ENCODE measurements at regions of chr1 and their contacts with region 1.

Region 1: GRCh38 chr1:53945433-53946251 is at the start of gene IFT25:
- DNase-seq: peak; percentile 96 to 98
- ATAC-seq: peak; percentile 93 to 98 (median 94)
- H3K4me3 ChIP-seq: peak within 1 kb of the TSS; percentile 59 to 97 (median 87)
- H3K27ac ChIP-seq: peak within 1 kb of the TSS; percentile 83 to 95 (median 89)
- H3K4me1 ChIP-seq: peaks cover 0 to 52% (median 39%) of the 10 kb centered on the region in 9 donors
- H3K27me3 ChIP-seq: no peaks in the 10 kb centered on the region
- CTCF ChIP-seq: peak in 1 of 9 donors; percentile 32
- total RNA-seq, gene IFT25: 7.8 to 16.0 (median 10.7) TPM

Region 2: GRCh38 chr1:53837924-53838652 is 107.6 kb before region 1 on chr1 and contains the start of gene NDC1:
- intact Hi-C with region 1: loop called in 1 of 10 experiments (anchors 5 kb)
- DNase-seq: peak; percentile 86 to 95
- ATAC-seq: peak; percentile 98 to 99 (median 99)
- H3K4me3 ChIP-seq: peak within 1 kb of the TSS; percentile 52 to 97 (median 76)
- H3K27ac ChIP-seq: peak within 1 kb of the TSS; percentile 89 to 99 (median 97)
- H3K4me1 ChIP-seq: peaks cover 0 to 15% (median 10%) of the 10 kb centered on the region in 9 donors
- H3K27me3 ChIP-seq: peaks cover 0 to 5% (median 0%) of the 10 kb centered on the region in 7 donors
- CTCF ChIP-seq: peak in 5 of 9 donors; percentile 17 to 47 (median 28)
- total RNA-seq, gene NDC1: 4.2 to 8.0 (median 5.8) TPM

Region 3: DNA sequence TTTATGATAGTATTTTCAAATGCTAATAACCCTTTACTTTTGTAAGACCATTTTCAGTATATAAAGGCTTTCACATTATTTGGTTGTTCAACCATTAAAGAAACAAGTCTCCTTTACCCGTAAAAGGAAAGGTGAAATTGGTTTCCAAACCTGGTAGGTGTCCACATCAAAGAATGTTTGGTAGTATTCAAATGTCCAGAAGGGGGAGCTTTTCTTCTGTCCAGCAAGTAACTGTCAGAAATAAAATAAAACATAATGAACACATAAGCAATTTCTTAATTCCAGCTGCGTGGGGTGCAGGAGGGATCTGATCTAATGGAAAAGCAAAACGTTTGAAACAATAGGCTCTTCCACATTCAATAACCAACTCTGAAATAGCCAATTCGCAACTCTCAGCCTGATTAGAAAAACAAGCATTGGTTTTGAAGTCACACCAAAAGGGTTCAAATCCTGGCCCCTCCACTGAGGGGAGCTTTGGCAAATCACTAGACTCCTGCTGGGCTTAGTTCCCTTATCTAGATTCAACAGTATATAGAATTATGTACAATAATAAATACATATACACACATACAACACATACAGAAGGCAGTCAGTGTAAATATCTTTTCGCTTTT is 67.0 kb before region 1 on chr1:
- intact Hi-C with region 1: loop called in 2 of 10 experiments (anchors 5 kb)
- DNase-seq: no peak
- ATAC-seq: no peak
- H3K4me3 ChIP-seq: no peak overlapping the region
- H3K27ac ChIP-seq: no peak overlapping the region
- H3K4me1 ChIP-seq: no peaks in the 10 kb centered on the region
- H3K27me3 ChIP-seq: no peaks in the 10 kb centered on the region
- CTCF ChIP-seq: peak; percentile 20 to 71 (median 61)

Region 4: DNA sequence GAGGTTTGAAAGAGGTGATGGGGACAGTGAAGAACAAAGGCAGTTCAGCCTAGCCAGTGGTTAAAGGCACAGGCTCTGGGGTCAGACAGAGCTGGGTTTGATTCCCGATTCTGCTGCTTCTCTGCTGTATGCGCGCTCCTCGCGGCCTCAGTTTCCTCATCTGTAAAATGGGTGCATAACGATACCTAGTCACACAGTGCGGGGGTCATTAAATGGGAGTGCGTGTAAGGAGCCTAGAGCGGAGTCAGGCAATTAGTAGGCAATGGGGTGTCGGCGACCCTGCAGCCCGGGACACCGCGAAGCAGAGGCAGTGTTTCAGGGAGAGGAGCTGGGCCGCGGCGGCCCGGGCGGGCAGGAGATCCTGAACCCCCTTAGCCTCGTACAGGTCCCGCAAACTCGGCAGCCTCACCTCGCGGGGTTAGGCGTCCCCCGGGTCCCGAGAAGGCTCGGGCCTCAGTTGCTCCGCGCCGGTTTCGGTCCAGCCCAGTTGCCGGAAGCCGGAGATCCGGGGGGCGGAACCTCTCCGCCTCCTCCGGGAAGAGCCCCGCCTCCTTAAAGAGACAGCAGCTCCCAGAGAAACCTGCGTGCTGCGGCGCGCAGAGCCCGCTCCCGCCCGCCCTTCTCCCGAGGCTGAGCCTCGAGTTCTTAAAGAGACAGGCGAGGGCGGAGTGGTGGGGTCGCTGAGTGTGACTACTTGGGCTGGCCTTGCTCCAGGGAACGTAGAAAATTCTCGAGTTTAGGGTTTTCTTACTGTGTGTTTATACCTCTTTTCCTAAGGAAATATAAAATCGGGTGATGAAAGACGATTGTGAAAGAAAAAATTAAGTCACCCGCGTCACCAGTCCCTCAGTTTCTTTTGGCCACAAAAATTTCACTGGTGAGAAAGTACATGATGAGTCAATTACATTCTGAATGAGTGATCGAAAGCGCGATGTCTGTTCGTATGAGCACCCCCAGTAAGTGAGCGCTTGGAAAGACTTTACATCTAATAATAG is 56.0 kb before region 1 on chr1 and contains the start of gene YIPF1:
- intact Hi-C with region 1: loop called in 8 of 10 experiments (anchors 2 to 5 kb)
- DNase-seq: peak; percentile 90
- ATAC-seq: peak; percentile 98 to 100 (median 99)
- H3K4me3 ChIP-seq: peak within 1 kb of the TSS; percentile 60 to 100 (median 82)
- H3K27ac ChIP-seq: peak within 1 kb of the TSS in 9 of 10 donors; percentile 49 to 92 (median 77)
- H3K4me1 ChIP-seq: peaks cover 0 to 36% (median 13%) of the 10 kb centered on the region in 9 donors
- H3K27me3 ChIP-seq: no peaks in the 10 kb centered on the region
- CTCF ChIP-seq: no peak
- total RNA-seq, gene YIPF1: 10.2 to 20.1 (median 13.2) TPM

Region 5: GRCh38 chr1:53971718-53972117 is 26.1 kb after region 1 on chr1:
- intact Hi-C with region 1: loop called in 1 of 10 experiments (anchors 1 kb)
- DNase-seq: no peak
- ATAC-seq: no peak
- H3K4me3 ChIP-seq: no peak overlapping the region
- H3K27ac ChIP-seq: no peak overlapping the region
- H3K4me1 ChIP-seq: peaks cover 0 to 9% (median 0%) of the 10 kb centered on the region in 9 donors
- H3K27me3 ChIP-seq: no peaks in the 10 kb centered on the region
- CTCF ChIP-seq: no peak

Region 6: DNA sequence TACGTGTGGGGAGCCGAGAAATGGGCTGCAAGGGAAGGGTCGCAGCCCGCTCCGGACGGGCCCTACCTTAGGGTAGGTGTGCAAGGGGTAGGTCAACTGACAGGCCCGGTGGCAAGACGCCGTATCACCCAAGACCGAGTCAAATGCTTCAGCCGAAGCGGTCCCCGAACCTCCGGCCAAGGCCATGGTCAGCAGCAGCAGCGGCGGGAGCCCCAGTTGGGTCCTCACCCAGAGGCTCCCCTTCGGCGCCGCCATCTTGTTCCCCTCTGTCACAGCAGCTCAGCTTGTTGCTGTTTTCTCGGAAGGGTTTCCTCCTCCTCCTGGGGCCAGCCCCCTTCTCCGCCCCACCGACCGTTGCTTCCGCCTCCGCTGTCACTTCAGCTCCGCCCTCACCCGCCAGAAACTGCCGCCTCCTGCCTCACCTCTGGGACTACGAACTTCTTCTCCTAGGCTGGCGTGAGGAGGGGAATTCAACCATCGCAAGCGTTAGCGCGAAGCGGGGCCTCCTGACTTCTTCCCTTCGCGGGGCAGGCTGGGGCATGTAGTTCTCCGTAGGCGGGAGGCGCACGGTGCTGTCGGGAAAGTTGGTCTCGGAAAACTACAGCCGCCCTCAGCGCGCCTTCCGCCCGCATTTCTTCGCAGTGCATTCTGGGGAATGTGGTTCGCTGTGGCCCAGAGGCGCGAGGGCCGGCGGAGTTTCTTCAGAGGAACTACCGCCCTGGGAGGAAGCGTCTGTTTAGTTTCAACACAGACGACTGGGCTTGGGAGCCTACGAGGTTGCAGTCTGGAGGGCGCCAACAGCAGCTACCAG is 107.5 kb after region 1 on chr1 and contains the starts of genes TCEANC2 and TMEM59:
- intact Hi-C with region 1: loop called in 3 of 10 experiments (anchors 5 to 10 kb)
- DNase-seq: peak; percentile 96 to 98
- ATAC-seq: peak; percentile 96 to 98 (median 97)
- H3K4me3 ChIP-seq: peak within 1 kb of the TSS; percentile 78 to 93 (median 85)
- H3K27ac ChIP-seq: peak within 1 kb of the TSS; percentile 81 to 98 (median 95)
- H3K4me1 ChIP-seq: peaks cover 9 to 56% (median 49%) of the 10 kb centered on the region in 9 donors
- H3K27me3 ChIP-seq: no peaks in the 10 kb centered on the region
- CTCF ChIP-seq: no peak
- total RNA-seq, gene TCEANC2: 2.3 to 5.9 (median 4.1) TPM
- total RNA-seq, gene TMEM59: 285 to 474 (median 345) TPM

Measured in heart right ventricle (tissue), 16 donors.